Heart right ventricle (tissue), 16 donors: ENCODE measurements at regions of chr19 and their contacts with region 1.

Region 1: DNA sequence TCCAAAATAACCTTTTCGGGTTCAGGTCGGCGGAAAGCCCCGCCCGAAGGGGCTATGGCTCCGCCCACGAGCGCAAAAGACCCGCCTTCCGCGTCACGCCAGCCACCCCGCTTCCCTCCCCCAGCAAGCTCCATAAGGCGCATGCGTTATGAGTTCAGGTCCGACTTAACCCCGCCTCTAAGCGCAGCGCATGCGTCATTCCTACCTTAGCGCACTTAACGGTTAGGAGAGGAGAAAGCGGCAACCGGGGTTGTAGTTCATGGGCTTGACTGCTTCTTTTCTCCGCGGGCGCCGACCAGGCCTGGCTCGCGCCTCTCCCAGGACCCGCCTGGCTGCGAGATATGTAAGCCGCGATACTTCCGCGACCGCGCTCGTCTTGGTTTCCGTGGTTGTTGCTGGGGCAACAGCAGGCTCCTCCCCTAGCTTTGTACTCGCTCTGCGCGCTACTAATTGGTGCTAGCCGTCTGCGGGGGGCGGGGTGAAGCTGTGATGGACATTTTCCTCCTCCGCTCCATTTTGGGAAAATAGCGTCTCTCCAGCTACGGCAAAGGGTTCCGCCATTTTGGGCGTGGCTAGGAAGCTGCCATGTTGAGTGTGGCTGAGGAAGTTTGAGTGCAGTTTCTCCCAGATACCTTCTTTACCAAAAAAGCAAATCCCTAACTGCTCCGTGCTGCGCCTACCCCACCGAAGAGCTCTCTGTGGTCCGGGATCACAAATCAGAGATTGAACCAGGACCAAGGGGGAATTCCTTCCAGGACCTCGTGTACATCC is at the start of gene B9D2:
- DNase-seq: peak; percentile 96 to 99
- ATAC-seq: peak; percentile 96 to 98 (median 98)
- H3K4me3 ChIP-seq: peak within 1 kb of the TSS; percentile 20 to 89 (median 71)
- H3K27ac ChIP-seq: peak within 1 kb of the TSS; percentile 75 to 99 (median 97)
- H3K4me1 ChIP-seq: peaks cover 2 to 59% (median 15%) of the 10 kb centered on the region in 9 donors
- H3K27me3 ChIP-seq: no peaks in the 10 kb centered on the region
- CTCF ChIP-seq: no peak
- total RNA-seq, gene B9D2: 1.00 to 5.8 (median 2.3) TPM

Region 2: DNA sequence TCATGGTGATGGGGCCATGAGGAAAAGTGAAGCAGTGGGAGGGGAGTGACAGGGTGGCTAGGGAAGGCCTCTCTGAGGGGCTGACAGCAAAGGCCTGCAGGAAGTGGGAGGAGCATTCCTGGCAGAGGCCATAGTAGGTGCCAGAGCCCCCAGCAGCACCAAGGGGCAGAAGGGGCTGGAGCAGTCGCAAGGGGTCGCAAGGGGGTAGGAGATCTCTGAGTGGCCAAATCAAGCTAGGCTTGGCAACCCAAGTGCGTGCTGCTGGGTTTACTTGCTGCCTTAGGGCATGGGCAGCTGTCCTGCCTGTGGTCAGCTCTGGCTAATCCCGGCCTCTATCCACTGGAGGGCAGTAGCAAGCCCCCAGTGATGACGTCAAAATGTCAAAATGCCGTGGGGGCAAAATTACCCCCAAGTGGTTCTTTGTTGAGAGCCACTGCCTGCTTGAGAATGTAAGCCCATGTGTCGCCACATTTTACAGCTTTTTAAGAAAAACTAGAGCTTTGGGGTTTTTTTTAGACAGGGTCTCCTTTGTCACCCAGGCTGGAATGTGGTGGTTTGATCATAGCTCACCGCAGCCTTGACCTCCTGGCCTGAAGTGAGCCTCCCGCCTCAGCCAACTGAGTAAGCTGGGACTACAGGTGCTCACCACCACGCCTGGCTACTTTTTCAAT is 42.2 kb before region 1 on chr19:
- intact Hi-C with region 1: loop called in 2 of 10 experiments (anchors 5 kb)
- DNase-seq: no peak
- ATAC-seq: peak in 1 of 8 donors; percentile 9
- H3K4me3 ChIP-seq: no peak overlapping the region
- H3K27ac ChIP-seq: peak overlapping the region in 9 of 10 donors; percentile 32 to 96 (median 90)
- H3K4me1 ChIP-seq: peaks cover 35 to 58% (median 56%) of the 10 kb centered on the region in 9 donors
- H3K27me3 ChIP-seq: no peaks in the 10 kb centered on the region
- CTCF ChIP-seq: peak; percentile 45 to 80 (median 74)

Region 3: GRCh38 chr19:41397086-41398049 is 33.4 kb after region 1 on chr19 and contains the starts of genes BCKDHA and EXOSC5:
- intact Hi-C with region 1: loop called in 3 of 10 experiments (anchors 1 to 5 kb)
- DNase-seq: peak; percentile 99 to 100
- ATAC-seq: peak; percentile 98 to 99 (median 99)
- H3K4me3 ChIP-seq: peak within 1 kb of the TSS; percentile 58 to 96 (median 88)
- H3K27ac ChIP-seq: peak within 1 kb of the TSS; percentile 76 to 95 (median 92)
- H3K4me1 ChIP-seq: peaks cover 14 to 51% (median 36%) of the 10 kb centered on the region in 9 donors
- H3K27me3 ChIP-seq: no peaks in the 10 kb centered on the region
- CTCF ChIP-seq: no peak
- total RNA-seq, gene BCKDHA: 35.5 to 63.0 (median 42.5) TPM
- total RNA-seq, gene EXOSC5: 10.6 to 17.8 (median 13.6) TPM